ENCODE measurements at regions of chr11 and their contacts with region 1.

Region 1: GRCh38 chr11:61967116-61967923 is at the start of gene FTH1:
- DNase-seq: peak; percentile 93
- ATAC-seq: peak; percentile 76
- H3K4me3 Mint-ChIP-seq: peak within 1 kb of the TSS; percentile 91
- H3K27ac Mint-ChIP-seq: peak within 1 kb of the TSS; percentile 92
- H3K4me1 Mint-ChIP-seq: peaks cover 63% of the 10 kb centered on the region
- H3K27me3 Mint-ChIP-seq: no peaks in the 10 kb centered on the region
- total RNA-seq, gene FTH1: 777 to 914 TPM

Region 2: GRCh38 chr11:61891331-61892084 is 75.8 kb before region 1 on chr11 and contains the start of gene FADS3:
- CTCF ChIA-PET with region 1: no interaction called
- POLR2A ChIA-PET with region 1: no interaction called
- intact Hi-C with region 1: loop called (anchors 1 to 5 kb)
- DNase-seq: peak; percentile 68
- ATAC-seq: peak; percentile 74
- H3K4me3 Mint-ChIP-seq: peak within 1 kb of the TSS; percentile 76
- H3K27ac Mint-ChIP-seq: peak within 1 kb of the TSS; percentile 58
- H3K4me1 Mint-ChIP-seq: peaks cover 2% of the 10 kb centered on the region
- H3K27me3 Mint-ChIP-seq: no peaks in the 10 kb centered on the region
- total RNA-seq, gene FADS3: 7.2 to 10.1 TPM

Region 3: DNA sequence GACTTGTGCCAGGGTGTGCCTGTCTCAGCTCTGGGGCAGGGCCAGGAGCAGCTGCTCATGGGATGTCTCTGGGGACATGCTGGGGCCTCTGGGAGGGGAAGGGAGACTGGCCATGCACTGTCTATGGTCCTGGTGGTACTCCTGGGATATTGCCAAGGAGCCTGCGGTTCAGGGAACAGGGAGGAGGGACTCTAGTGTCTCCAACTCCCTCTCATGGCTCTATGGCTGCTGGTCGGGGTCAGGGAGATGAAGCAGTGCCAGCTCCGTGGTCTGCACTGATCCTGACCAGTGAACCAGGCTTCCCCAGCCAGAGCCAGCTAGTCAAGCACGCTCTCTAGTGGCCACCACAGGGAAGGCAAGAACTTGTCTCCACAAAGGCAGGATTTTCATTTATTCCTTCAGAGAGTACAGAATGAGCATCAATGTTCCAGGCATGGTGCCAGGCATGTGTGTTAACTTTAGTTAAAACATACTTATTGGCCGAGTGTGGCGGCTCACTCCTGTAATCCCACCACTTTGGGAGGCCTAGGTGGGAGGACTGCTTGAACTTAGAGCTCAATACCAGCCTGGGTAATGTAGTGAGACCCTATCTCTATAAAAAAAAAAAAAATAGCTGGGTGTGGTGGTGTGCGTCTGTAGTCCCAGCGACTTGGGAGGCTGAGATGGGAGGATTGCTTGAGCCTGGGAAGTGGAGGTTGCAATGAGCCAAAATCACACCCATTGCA is 19.7 kb before region 1 on chr11:
- CTCF ChIA-PET with region 1: interaction called, 7 read pairs
- POLR2A ChIA-PET with region 1: interaction called, 5 read pairs
- intact Hi-C with region 1: loop called in 1 of 2 experiments (anchors 2 kb)
- DNase-seq: peak; percentile 84
- ATAC-seq: peak; percentile 72
- H3K4me3 Mint-ChIP-seq: no peak overlapping the region
- H3K27ac Mint-ChIP-seq: no peak overlapping the region
- H3K4me1 Mint-ChIP-seq: peaks cover 5% of the 10 kb centered on the region
- H3K27me3 Mint-ChIP-seq: peaks cover 2% of the 10 kb centered on the region

Region 4: GRCh38 chr11:62025487-62026105 is 58.3 kb after region 1 on chr11:
- CTCF ChIA-PET with region 1: interaction called, 3 read pairs
- POLR2A ChIA-PET with region 1: interaction called, 3 read pairs
- intact Hi-C with region 1: loop called (anchors 1 to 5 kb)
- DNase-seq: peak; percentile 81
- ATAC-seq: peak; percentile 90
- H3K4me3 Mint-ChIP-seq: peak overlapping the region; percentile 15
- H3K27ac Mint-ChIP-seq: peak overlapping the region; percentile 88
- H3K4me1 Mint-ChIP-seq: peaks cover 17% of the 10 kb centered on the region
- H3K27me3 Mint-ChIP-seq: no peaks in the 10 kb centered on the region

Region 5: GRCh38 chr11:62081378-62082291 is 114.3 kb after region 1 on chr11:
- CTCF ChIA-PET with region 1: interaction called, 16 read pairs
- POLR2A ChIA-PET with region 1: interaction called, 4 read pairs
- intact Hi-C with region 1: loop called (anchors 1 to 5 kb)
- DNase-seq: peak; percentile 90
- ATAC-seq: peak; percentile 92
- H3K4me3 Mint-ChIP-seq: no peak overlapping the region
- H3K27ac Mint-ChIP-seq: no peak overlapping the region
- H3K4me1 Mint-ChIP-seq: peaks cover 8% of the 10 kb centered on the region
- H3K27me3 Mint-ChIP-seq: no peaks in the 10 kb centered on the region

Region 6: DNA sequence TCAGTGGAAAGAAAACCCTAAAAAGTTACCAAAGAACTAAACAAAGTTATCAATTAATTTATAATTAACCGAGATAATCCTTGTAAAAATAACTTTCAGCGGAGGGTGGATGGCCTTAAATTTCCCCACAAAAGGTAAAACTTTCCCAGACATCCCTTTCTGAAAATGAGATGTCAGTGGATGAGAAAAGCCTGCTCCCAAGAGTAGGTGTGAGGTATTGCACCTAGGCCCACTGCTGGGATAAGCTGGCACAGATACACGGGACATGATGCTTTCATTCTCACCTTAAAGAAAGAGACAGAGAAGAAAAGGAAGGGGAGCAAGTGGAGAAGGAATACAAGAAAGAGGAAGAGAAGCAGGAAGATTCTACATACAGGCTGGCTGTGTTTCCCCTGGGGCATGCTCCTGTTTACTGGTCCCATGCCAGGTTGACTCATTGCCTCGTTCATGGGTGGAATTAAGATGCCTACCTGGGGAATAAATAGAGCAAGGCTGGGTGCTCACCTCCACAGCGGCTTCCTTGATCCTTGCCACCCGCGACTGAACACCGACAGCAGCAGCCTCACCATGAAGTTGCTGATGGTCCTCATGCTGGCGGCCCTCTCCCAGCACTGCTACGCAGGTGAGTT is 302.4 kb after region 1 on chr11 and contains the start of gene SCGB2A2:
- CTCF ChIA-PET with region 1: no interaction called
- POLR2A ChIA-PET with region 1: no interaction called
- intact Hi-C with region 1: loop called in 1 of 2 experiments (anchors 5 kb)
- DNase-seq: no peak
- ATAC-seq: no peak
- H3K4me3 Mint-ChIP-seq: no peak within 1 kb of the TSS
- H3K27ac Mint-ChIP-seq: no peak within 1 kb of the TSS
- H3K4me1 Mint-ChIP-seq: peaks cover 25% of the 10 kb centered on the region
- H3K27me3 Mint-ChIP-seq: peaks cover 14% of the 10 kb centered on the region
- total RNA-seq, gene SCGB2A2: not detected

Measured in activated CD4-positive, alpha-beta T cell treated with anti-CD3 and anti-CD28 coated beads for 36 hours (primary cell).